ENCODE measurements at regions of chr5 and their contacts with region 1.

Region 1: GRCh38 chr5:42994246-42995151 is 45.6 kb downstream of the ANXA2R start:
- DNase-seq: peak; percentile 84
- ATAC-seq: peak; percentile 59
- H3K4me3 Mint-ChIP-seq: peak overlapping the region; percentile 98
- H3K27ac Mint-ChIP-seq: peak overlapping the region; percentile 98
- H3K4me1 Mint-ChIP-seq: peaks cover 23% of the 10 kb centered on the region
- H3K27me3 Mint-ChIP-seq: no peaks in the 10 kb centered on the region

Region 2: GRCh38 chr5:42908509-42909488 is 85.7 kb before region 1 on chr5:
- POLR2A ChIA-PET with region 1: interaction called, 33 read pairs
- DNase-seq: peak; percentile 84
- ATAC-seq: peak; percentile 91
- H3K4me3 Mint-ChIP-seq: peak overlapping the region; percentile 82
- H3K27ac Mint-ChIP-seq: peak overlapping the region; percentile 55
- H3K4me1 Mint-ChIP-seq: peaks cover 11% of the 10 kb centered on the region
- H3K27me3 Mint-ChIP-seq: peaks cover 24% of the 10 kb centered on the region

Region 3: DNA sequence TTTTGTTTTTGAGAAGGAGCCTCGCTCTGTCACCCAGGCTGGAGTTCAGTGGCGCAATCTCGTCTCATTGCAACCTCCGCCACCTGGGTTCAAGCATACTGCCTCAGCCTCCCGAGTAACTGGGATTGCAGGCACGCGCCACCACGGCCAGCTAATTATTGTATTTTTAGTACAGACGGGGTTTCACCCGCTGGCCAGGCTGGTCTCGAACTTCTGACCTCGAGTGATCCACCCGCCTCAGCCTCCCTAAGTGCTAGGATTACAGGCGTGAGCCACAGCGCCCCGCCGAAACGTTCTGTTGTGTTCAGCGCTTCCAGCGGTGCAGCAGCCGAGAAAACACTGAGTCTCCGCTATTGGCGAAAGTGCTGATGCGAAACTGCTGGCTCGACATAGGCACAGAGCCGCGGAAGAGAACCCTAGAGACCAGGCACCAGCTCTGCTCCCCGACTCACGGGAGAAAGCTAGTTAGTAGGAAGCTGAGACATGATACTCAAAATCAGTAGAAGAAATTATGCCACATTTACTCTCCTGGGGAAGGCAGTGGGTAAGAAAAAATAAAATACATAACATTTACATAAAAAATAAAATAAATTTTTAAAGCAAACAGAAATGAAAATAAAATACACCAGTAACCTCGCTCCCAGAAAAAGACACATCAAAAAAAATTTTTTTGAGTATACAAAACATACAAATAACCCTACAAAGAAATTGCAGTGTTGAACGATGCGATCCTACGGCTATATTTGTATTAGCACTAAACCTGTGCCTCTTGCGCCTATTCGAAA is 14.1 kb after region 1 on chr5:
- POLR2A ChIA-PET with region 1: interaction called, 322 read pairs
- DNase-seq: peak; percentile 88
- ATAC-seq: peak; percentile 61
- H3K4me3 Mint-ChIP-seq: peak overlapping the region; percentile 90
- H3K27ac Mint-ChIP-seq: peak overlapping the region; percentile 99
- H3K4me1 Mint-ChIP-seq: peaks cover 35% of the 10 kb centered on the region
- H3K27me3 Mint-ChIP-seq: no peaks in the 10 kb centered on the region

Region 4: DNA sequence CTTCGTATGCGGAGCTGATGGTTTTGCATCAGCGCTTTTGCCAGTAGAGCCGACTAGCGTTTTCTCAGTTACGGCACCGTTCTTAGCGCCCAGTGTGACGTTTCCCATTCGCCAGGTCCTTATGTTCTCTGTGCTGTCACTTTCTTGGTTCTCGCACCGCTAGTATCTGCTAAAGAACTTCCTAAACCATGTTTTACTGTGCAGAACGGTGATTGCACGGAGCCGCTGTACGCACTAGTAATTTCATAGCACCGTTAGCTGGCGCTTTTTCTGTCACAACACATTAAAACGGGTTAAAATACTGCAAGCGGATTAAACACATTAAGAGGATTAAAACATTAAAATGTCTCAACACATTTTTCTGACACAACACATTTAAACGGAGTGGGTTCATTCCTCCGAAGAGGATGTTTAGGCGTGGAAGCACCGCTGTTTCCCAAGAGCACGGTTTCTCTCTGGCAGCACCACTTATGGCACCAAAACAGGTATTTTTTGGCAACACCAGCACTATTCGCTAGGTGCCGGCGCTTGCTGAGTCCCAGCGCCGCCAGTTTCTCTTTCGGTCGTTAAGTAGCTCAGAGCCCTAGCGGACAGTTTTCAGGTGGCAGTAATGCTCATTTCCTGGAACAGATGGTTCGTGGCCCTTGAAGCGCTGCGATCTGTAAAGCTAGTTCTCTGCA is 25.3 kb after region 1 on chr5:
- POLR2A ChIA-PET with region 1: interaction called, 343 read pairs
- DNase-seq: peak; percentile 75
- ATAC-seq: peak; percentile 72
- H3K4me3 Mint-ChIP-seq: peak overlapping the region; percentile 97
- H3K27ac Mint-ChIP-seq: peak overlapping the region; percentile 100
- H3K4me1 Mint-ChIP-seq: peaks cover 27% of the 10 kb centered on the region
- H3K27me3 Mint-ChIP-seq: no peaks in the 10 kb centered on the region

Region 5: DNA sequence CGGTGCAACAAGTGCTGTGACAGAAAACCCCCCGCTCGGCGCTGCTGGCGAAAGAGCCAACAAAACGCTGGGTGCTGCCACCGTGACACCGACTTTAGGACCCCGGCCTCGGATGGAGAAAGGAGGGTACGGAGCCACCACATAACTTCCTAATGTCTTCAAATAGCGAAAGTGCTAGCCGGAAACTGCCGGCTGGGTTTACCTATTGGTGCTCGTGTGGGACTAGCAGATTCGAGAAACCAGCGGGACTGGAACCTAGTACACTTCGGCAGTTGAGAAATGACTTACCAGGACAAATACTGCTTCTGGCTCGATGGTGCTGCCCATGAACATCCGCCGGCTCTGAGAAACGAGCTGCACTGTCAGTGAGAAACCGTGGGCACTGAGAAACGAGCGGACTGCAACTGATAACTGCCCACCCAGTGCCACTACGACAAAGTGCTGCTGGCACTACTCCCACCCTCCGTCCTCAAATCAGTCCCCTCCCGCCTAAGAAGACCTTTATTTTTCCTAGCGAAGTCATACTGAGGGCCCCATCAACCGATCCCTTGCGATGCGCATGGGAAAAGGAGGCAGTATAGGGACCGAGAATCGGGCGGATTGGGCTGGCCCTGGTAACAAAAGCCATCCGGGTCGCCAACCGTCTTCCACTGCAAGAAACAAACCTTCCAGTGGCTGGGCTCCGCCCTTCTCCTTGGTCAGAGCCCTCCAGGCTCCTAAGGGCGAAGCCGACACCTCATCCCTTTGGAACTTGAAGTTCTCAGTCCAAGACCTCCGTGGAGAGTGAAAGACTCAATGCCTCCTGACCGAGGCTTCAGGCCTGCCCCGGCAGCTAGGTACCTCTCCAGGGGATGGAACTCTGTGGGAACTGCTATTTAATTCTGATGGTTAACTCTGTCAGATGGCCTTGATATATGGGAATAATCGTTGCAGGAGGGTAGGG is 72.6 kb after region 1 on chr5:
- POLR2A ChIA-PET with region 1: interaction called, 120 read pairs
- DNase-seq: peak; percentile 85
- ATAC-seq: peak; percentile 39
- H3K4me3 Mint-ChIP-seq: peak overlapping the region; percentile 99
- H3K27ac Mint-ChIP-seq: peak overlapping the region; percentile 100
- H3K4me1 Mint-ChIP-seq: peaks cover 30% of the 10 kb centered on the region
- H3K27me3 Mint-ChIP-seq: no peaks in the 10 kb centered on the region

Measured in activated naive CD8-positive, alpha-beta T cell treated with anti-CD3 and anti-CD28 coated beads, Interleukin-2, amount 10 ng/mL, durations not matched to agents 7 days and 5 days (primary cell).